MCF 10A (cell line): ENCODE measurements at regions of chr1 and their contacts with region 1.

Region 1: GRCh38 chr1:116020668-116021275 is 44.5 kb downstream of the SLC22A15 start:
- DNase-seq: peak; percentile 75
- H3K4me3 Mint-ChIP-seq: no peak overlapping the region
- H3K27ac Mint-ChIP-seq: no peak overlapping the region
- H3K4me1 Mint-ChIP-seq: peaks cover 5% of the 10 kb centered on the region
- H3K27me3 Mint-ChIP-seq: no peaks in the 10 kb centered on the region
- CTCF ChIP-seq: peak; percentile 72

Region 2: DNA sequence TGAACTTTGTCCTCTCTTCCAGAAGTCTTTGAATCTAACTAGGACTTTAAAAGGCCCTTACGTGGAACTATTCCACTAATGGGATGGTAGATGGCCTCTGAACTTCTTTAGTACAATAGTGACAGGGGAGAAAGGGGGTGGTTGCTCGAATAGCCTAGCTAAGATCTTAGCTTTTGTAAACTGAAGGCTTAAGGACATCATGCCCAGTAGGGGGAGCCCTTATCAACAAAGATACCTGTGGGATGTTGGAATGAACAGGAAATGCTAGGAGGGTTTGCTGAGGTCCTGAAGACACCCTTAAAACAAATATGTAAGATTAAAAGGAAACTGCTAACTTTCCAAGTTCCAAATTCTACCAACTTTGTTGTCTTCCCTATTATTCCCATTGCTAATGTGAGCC is 213.0 kb before region 1 on chr1:
- CTCF ChIA-PET with region 1: interaction called, 37 read pairs
- POLR2A ChIA-PET with region 1: interaction called, 4 read pairs
- intact Hi-C with region 1: loop called (anchors 2 kb)
- DNase-seq: peak; percentile 82
- H3K4me3 Mint-ChIP-seq: no peak overlapping the region
- H3K27ac Mint-ChIP-seq: no peak overlapping the region
- H3K4me1 Mint-ChIP-seq: peaks cover 13% of the 10 kb centered on the region
- H3K27me3 Mint-ChIP-seq: no peaks in the 10 kb centered on the region
- CTCF ChIP-seq: peak; percentile 62

Region 3: DNA sequence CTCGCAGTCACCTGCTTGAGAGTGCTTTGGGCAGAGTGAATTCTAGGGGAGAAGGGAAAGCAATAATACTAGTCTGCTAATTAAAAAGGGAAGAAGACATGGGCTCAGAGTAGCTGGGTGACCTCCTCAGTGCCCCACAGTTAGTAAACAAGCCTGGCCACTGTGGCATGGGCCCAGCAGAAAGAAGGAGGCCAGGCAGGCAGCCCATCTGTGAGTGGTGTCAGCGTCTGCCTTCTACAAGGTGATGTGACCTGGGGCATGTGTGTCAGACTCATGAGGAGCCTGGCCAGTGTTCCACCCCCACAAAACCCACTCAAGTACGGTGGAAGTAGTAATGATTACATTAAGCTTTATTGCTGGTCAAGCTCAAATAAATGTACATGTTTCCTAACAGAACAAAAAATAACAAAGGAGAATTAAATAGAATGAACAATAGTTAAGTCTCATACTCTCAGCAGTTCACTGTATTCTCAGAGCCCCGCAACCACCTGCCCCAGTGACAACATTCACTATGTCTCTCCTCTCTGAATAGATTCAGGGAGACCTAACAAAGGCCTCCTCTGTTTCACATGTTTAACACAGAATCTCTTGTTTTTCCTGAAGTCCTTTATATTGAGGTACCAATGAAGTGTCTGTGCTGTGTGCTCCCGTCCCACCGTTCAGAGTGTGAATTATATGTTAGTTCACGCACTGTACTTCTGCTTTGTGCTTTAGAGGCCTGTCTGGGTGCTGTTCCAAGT is 12.0 kb before region 1 on chr1:
- CTCF ChIA-PET with region 1: interaction called, 15 read pairs
- POLR2A ChIA-PET with region 1: interaction called, 4 read pairs
- intact Hi-C with region 1: no loop called
- DNase-seq: no peak
- H3K4me3 Mint-ChIP-seq: no peak overlapping the region
- H3K27ac Mint-ChIP-seq: peak overlapping the region; percentile 12
- H3K4me1 Mint-ChIP-seq: peaks cover 6% of the 10 kb centered on the region
- H3K27me3 Mint-ChIP-seq: no peaks in the 10 kb centered on the region
- CTCF ChIP-seq: no peak

Region 4: DNA sequence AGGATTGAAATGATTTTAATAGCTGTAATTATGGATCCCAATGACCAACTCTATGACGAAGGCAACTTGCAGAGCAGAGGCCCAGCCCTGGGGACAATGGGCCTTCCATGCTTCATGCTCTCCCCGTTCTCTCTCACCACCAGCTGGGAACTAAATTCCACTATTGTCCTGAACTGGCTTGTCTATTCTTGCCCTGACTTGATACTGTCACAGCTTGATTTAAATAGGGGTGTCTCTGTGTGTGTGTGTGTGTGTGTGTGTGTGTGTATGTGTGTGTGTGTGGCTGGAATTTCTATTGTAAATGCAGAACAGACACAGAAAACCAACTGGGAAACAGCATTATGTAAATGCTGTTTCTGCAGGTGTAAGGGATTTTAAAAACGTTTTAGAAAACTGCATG is 12.6 kb after region 1 on chr1:
- CTCF ChIA-PET with region 1: interaction called, 32 read pairs
- POLR2A ChIA-PET with region 1: interaction called, 4 read pairs
- intact Hi-C with region 1: no loop called
- DNase-seq: peak; percentile 17
- H3K4me3 Mint-ChIP-seq: no peak overlapping the region
- H3K27ac Mint-ChIP-seq: no peak overlapping the region
- H3K4me1 Mint-ChIP-seq: peaks cover 5% of the 10 kb centered on the region
- H3K27me3 Mint-ChIP-seq: no peaks in the 10 kb centered on the region
- CTCF ChIP-seq: no peak